Caco-2 (cell line): ENCODE measurements at regions of chr12 and their contacts with region 1.

Region 1: DNA sequence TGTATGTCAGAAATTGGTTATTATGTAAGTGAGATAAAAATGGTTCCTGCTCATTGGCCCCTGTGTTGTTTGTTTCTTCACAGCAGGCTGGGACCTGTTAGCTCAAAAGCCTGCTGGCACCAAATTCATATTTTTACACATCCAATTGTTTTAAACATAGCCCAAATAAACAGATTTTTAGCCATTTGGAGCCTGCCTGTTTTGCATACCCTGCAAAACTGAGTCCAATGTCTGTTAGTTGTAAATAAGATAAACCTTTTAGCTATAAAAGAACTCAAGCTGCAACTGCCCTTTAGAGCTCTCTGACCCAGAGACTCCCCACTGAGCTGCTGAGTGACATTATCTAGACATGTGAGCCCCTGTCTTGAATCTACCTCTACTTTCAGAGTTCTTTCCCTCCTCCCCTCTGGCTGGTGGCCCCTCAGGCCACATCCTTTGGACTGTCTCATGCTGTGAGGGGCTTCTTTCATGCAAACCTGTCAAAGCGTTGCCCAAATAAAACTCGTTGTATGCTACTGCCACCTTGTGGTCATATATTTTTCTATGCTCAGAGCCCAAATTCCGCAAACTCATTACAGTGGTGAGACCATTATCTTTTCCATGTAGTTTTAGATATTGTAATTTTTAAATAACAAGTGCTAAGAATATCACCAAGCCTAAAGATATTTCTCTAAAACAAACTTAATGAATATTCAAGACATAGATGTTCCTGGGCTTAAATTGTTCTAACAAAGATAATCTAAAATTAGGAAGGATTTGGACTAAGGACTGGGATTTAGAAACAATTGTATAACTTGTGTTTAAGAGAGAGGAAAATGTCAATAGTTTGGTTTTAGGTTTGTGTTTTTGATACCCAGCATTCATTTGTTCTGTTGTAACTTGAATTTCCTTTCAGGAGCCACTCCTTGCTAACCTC is 337.9 kb downstream of the AACS start:
- DNase-seq: peak in 1 of 2 experiments; percentile 39
- H3K4me3 ChIP-seq: no peak overlapping the region
- H3K4me3 Mint-ChIP-seq: no peak overlapping the region
- H3K27ac Mint-ChIP-seq: no peak overlapping the region
- H3K4me1 ChIP-seq: peaks cover 5% of the 10 kb centered on the region; the same call in 1 of the 2 replicates
- H3K4me1 Mint-ChIP-seq: no peaks in the 10 kb centered on the region
- H3K27me3 ChIP-seq: no peaks in the 10 kb centered on the region; the same call in 1 of the 2 replicates
- H3K27me3 Mint-ChIP-seq: peaks cover 8% of the 10 kb centered on the region
- CTCF ChIP-seq: peak; percentile 59 to 71

Region 2: GRCh38 chr12:125330645-125331341 is 72.3 kb before region 1 on chr12:
- CTCF ChIA-PET with region 1: interaction called, 10 read pairs
- POLR2A ChIA-PET with region 1: no interaction called
- intact Hi-C with region 1: loop called (anchors 1 kb)
- DNase-seq: peak; percentile 62 to 84
- H3K4me3 ChIP-seq: peak overlapping the region; percentile 26
- H3K4me3 Mint-ChIP-seq: peak overlapping the region; percentile 37
- H3K27ac Mint-ChIP-seq: no peak overlapping the region
- H3K4me1 ChIP-seq: no peaks in the 10 kb centered on the region
- H3K4me1 Mint-ChIP-seq: no peaks in the 10 kb centered on the region
- H3K27me3 ChIP-seq: peaks cover 1% of the 10 kb centered on the region; the same call in 1 of the 2 replicates
- H3K27me3 Mint-ChIP-seq: peaks cover 15% of the 10 kb centered on the region
- CTCF ChIP-seq: peak; percentile 83 to 90